WTC11 (cell line): ENCODE measurements at regions of chr6 and their contacts with region 1.

Region 1: DNA sequence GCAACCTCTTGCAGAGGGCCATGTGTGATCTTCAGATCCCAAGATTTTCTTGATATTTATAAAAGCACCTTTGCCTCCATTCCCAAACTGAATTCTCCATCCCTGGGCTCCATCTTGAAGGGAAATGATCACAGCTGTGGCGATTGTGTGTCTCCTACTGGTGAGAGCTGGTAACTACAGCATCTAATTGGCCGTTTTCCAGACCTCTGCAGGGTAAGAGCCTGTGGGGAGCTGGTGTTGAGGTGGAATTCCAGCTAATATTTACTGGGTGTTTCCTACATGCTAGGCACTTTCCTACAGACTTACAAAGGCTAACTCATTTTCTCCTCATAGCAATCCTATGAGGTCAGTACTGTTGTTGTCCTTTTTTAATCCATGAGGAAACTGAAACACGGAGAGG is 59.2 kb upstream of the FNDC1 start:
- DNase-seq: peak; percentile 63
- ATAC-seq: peak; percentile 76
- H3K4me3 Mint-ChIP-seq: no peak overlapping the region
- H3K27ac Mint-ChIP-seq: no peak overlapping the region
- H3K4me1 Mint-ChIP-seq: peaks cover 18% of the 10 kb centered on the region
- H3K27me3 Mint-ChIP-seq: no peaks in the 10 kb centered on the region
- CTCF ChIP-seq: peak; percentile 89

Region 2: DNA sequence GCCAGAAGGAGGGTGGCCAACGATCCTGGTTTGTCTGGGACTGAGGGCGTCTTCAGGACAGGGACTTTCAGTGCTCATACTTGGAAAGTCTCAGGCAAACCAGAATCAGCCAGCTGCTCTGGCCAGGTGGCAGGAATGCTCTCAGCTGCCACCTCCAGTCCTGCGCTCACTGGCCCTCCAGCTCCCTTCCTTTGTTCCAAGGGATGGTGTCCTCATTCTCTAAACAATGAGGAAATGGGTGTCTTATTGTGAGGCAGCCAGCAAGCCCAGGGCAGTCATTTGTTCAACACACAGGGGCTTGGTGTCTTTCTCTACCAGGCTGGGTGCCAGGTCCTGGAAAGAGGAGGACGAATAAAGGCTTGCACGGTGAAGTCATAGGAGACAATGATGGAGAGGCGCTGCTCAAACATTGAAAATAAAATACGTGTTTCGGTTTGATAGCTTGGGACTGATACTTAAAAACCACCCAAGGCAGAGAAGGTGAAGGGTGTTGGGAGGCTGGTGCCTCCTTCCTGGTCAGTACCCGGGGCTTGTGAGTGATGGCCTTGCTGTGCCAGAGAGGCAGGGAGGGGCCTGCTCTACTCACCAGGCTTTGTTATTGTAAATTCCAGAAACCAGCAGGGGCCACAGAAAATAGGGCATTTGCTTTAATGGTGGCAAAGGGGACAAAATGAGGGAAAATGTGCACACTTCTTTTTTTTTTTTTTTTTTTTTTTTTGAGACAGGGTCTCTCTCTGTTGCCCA is 561.4 kb before region 1 on chr6:
- CTCF ChIA-PET with region 1: no interaction called
- POLR2A ChIA-PET with region 1: interaction called, 10 read pairs
- DNase-seq: no peak
- ATAC-seq: peak; percentile 60
- H3K4me3 Mint-ChIP-seq: no peak overlapping the region
- H3K27ac Mint-ChIP-seq: peak overlapping the region; percentile 47
- H3K4me1 Mint-ChIP-seq: peaks cover 11% of the 10 kb centered on the region
- H3K27me3 Mint-ChIP-seq: no peaks in the 10 kb centered on the region
- CTCF ChIP-seq: no peak

Region 3: DNA sequence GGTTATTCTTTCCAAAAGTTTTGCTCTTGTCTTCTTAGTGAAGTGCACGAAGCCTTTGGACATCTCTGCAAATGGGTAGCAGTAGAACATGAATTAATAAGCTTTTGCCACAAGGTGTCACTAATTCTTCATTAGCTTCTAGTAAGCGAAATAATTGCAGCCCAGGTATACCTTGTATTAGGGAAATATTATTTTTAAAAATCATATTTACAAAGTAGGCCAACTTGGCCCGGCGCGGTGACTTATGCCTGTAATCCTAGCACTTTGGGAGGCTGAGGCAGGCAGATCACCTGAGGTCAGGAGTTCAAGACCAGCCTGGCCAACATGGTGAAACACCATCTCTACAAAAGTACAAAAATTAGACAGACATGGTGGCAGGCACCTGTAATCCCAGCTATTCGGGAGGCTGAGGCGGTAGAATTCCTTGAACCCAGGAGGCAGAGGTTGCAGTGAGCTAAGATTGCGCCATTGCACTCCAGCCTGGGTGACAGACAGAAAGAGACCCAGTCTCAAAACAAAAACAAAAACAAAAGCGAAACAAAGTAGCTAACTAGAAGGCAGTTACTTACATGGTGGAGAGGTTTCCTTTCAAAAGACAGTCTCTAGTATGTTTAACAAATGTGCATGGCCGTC is 101.2 kb before region 1 on chr6:
- CTCF ChIA-PET with region 1: interaction called, 22 read pairs
- POLR2A ChIA-PET with region 1: no interaction called
- DNase-seq: no peak
- ATAC-seq: 0 out of 2 replicates have a peak, but pooled peaks have one; percentile 41
- H3K4me3 Mint-ChIP-seq: no peak overlapping the region
- H3K27ac Mint-ChIP-seq: no peak overlapping the region
- H3K4me1 Mint-ChIP-seq: no peaks in the 10 kb centered on the region
- H3K27me3 Mint-ChIP-seq: no peaks in the 10 kb centered on the region
- CTCF ChIP-seq: no peak

Region 4: GRCh38 chr6:159142531-159142930 is 32.5 kb after region 1 on chr6:
- CTCF ChIA-PET with region 1: no interaction called
- POLR2A ChIA-PET with region 1: no interaction called
- DNase-seq: no peak
- ATAC-seq: no peak
- H3K4me3 Mint-ChIP-seq: no peak overlapping the region
- H3K27ac Mint-ChIP-seq: no peak overlapping the region
- H3K4me1 Mint-ChIP-seq: no peaks in the 10 kb centered on the region
- H3K27me3 Mint-ChIP-seq: peaks cover 4% of the 10 kb centered on the region; the same call in 1 of the 2 replicates
- CTCF ChIP-seq: no peak